Aorta (tissue), 5 donors: ENCODE measurements at regions of chr6 and their contacts with region 1.

Region 1: GRCh38 chr6:32413427-32414047 is 6.6 kb upstream of the BTNL2 start:
- DNase-seq: peak; percentile 87 to 93
- ATAC-seq: peak; percentile 85
- H3K4me3 ChIP-seq: no peak overlapping the region
- H3K27ac ChIP-seq: no peak overlapping the region
- H3K4me1 ChIP-seq: no peaks in the 10 kb centered on the region
- H3K27me3 ChIP-seq: no peaks in the 10 kb centered on the region

Region 2: DNA sequence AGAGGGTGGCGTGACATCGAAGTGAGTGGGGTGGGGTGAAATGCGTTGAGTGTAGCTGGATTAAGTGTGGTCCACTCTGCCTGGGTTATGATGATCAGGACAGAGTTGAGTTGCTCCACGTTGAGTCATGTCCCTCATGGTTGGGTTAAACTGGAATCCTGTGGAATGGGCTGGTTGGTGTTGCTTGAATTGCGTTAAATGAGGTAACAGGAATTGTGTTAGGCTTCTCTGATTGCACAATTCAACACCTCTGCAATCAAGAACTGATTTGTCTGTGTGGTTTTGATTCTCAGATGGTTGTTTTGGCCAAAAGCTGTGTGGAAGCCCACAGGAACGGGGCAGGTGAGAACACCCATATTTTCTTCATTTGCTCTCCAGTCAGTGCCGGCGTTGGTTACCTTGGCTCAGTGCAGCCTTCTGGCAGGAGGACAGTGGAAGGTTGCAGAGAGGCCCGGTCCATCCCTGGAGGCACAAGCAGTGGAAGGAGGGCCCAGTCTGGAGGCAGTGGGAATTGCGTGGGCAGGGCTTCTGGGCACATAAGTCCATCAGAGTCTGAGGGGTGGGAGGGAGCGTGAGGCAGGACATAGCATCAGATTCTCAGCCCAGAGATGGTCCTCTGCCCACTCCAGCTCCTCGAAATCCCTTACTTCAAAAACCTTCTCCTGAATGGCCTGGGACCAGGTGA is 201.3 kb before region 1 on chr6:
- intact Hi-C with region 1: no loop called
- DNase-seq: no peak
- ATAC-seq: no peak
- H3K4me3 ChIP-seq: no peak overlapping the region
- H3K27ac ChIP-seq: no peak overlapping the region
- H3K4me1 ChIP-seq: no peaks in the 10 kb centered on the region
- H3K27me3 ChIP-seq: no peaks in the 10 kb centered on the region

Region 3: DNA sequence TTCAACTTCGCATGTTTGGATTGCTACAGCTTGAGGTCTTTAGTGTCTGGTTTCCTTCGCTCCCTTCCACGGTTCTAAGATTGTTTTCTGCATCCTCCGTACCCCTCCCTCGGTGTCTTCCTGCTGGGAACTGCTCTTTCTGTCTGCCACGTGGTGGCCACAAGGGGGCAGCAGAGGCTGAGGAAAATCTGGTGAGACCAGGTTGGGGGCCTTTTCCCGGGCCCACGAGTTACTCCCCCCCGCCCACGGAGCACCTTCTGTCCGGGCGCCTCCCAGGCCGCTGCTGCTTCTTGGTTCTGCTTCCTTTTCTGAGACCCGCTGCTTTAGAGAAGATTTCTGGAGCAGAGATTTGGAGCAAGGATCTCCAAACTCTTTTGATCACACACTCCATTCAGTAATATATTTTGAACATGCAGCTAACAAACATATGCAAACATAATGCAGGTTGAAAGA is 168.6 kb before region 1 on chr6:
- intact Hi-C with region 1: loop called (anchors 5 to 10 kb)
- DNase-seq: peak; percentile 86 to 94
- ATAC-seq: peak; percentile 95
- H3K4me3 ChIP-seq: no peak overlapping the region
- H3K27ac ChIP-seq: no peak overlapping the region
- H3K4me1 ChIP-seq: no peaks in the 10 kb centered on the region
- H3K27me3 ChIP-seq: no peaks in the 10 kb centered on the region

Region 4: GRCh38 chr6:32700391-32701040 is 287.0 kb after region 1 on chr6:
- intact Hi-C with region 1: loop called (anchors 5 kb)
- DNase-seq: no peak
- ATAC-seq: peak; percentile 78
- H3K4me3 ChIP-seq: no peak overlapping the region
- H3K27ac ChIP-seq: no peak overlapping the region
- H3K4me1 ChIP-seq: no peaks in the 10 kb centered on the region
- H3K27me3 ChIP-seq: no peaks in the 10 kb centered on the region

Region 5: DNA sequence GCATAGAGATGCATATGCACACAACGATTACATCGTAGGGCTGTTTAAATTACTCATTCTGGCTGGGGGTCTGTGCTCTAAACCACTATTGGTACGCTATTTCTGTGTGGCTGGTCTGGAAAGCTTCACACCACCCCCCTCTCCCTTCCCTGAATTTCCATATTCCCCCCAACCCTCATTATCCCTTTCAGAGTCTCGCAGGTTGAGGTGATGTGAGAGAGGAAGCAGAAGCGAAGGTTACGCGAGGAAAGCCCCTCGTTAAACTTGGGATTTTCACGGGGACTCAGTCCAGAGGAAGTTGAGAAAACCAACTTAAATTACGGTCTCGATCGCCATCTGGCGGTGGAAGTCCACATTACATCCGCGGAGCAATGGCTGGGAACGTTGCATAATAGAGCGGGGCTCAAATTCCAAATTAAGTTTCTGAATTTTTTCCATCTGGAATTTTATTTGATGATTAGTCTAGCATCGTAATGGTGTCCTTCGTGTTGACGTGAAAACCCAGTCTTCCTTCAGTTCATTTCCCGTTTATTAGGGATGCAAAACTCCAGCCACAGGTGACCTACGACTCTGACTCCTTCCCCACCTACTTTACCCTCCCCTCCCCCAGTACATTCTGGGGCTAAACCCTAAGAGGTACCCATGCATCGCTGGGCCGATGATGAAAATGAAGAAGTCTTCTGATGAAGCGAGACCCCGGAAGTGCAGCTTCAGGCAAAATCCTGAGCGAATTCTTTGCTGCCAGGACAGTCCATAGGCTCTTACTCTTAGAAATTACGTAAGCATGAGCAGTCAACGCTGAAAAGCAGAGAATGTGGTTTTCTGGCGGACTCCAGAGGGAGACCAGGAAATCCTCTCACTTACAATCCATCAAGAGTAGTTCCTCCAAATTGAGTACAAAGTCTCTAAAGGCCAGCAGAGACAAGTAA is 383.6 kb after region 1 on chr6:
- intact Hi-C with region 1: loop called (anchors 5 kb)
- DNase-seq: peak; percentile 81 to 92
- ATAC-seq: peak; percentile 91
- H3K4me3 ChIP-seq: no peak overlapping the region
- H3K27ac ChIP-seq: no peak overlapping the region
- H3K4me1 ChIP-seq: no peaks in the 10 kb centered on the region
- H3K27me3 ChIP-seq: no peaks in the 10 kb centered on the region